ENCODE measurements at regions of chr6 and their contacts with region 1.

Region 1: GRCh38 chr6:134182528-134182927 is 130.1 kb upstream of the SLC2A12 start:
- DNase-seq: no peak
- H3K4me3 ChIP-seq: peak overlapping the region in 4 of 59 donors; percentile 3 to 28 (median 21)
- H3K27ac ChIP-seq: peak overlapping the region in 56 of 59 donors; percentile 12 to 100 (median 71)
- H3K27me3 ChIP-seq: no peaks in the 10 kb centered on the region
- CTCF ChIP-seq: no peak

Region 2: GRCh38 chr6:134253681-134254080 is 71.2 kb after region 1 on chr6:
- intact Hi-C with region 1: loop called (anchors 5 to 10 kb)
- DNase-seq: peak in 5 of 10 donors; percentile 21 to 46 (median 29)
- H3K4me3 ChIP-seq: no peak overlapping the region
- H3K27ac ChIP-seq: peak overlapping the region in 54 of 59 donors; percentile 5 to 86 (median 73)
- H3K27me3 ChIP-seq: no peaks in the 10 kb centered on the region
- CTCF ChIP-seq: no peak

Region 3: DNA sequence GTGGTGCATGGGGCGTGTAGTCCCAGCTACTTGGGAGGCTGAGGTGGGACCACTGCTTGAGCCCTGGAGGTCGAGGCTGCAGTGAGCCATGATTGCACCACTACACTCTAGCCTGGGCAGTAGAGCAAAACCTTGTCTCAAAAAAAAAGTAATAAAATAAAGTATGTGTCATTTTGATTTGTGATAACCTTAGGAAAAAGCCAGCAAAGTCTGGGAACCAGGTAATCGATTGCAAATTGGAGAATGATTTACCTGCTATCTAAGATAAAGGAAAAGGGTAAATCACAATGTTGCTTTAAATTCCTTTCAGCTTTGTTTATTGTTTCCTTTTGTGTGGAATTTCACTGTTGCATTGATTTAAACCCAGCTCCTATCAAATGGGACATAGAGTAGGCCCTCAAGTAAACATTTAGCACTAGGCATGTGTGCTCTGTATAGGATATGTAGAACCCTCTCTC is 76.3 kb after region 1 on chr6:
- intact Hi-C with region 1: loop called (anchors 5 to 10 kb)
- DNase-seq: no peak
- H3K4me3 ChIP-seq: no peak overlapping the region
- H3K27ac ChIP-seq: peak overlapping the region in 9 of 59 donors; percentile 2 to 53 (median 16)
- H3K27me3 ChIP-seq: no peaks in the 10 kb centered on the region
- CTCF ChIP-seq: no peak

Region 4: DNA sequence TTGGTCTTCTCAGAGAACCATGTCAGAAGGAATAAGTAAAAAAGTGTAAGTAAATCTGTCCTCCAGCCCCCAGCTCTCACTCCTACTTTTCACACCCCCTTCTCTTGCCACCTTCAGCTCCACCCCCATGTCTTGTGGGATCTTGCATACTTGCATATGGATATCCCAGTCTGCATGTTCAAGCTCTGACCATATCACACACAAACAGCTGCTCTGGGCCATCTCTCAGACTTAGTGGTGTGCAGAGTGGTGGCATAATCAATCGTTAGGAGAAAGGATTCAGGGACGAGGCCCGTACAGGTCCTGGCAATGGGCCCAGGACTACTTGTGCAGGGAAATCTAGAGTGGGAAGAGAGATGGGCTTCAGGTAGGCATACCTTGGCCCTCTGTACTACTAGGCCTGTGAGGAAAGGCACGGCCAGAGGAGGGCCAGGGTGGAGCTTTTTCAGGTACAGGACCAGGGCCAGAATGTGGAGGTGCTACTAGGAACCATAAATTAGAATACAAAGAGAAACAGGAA is 247.4 kb after region 1 on chr6:
- intact Hi-C with region 1: no loop called
- DNase-seq: no peak
- H3K4me3 ChIP-seq: no peak overlapping the region
- H3K27ac ChIP-seq: no peak overlapping the region
- H3K27me3 ChIP-seq: no peaks in the 10 kb centered on the region
- CTCF ChIP-seq: no peak

Measured in dorsolateral prefrontal cortex (tissue), 120 donors.